HEK293 (cell line): ENCODE measurements at regions of chr12 and their contacts with region 1.

Region 1: DNA sequence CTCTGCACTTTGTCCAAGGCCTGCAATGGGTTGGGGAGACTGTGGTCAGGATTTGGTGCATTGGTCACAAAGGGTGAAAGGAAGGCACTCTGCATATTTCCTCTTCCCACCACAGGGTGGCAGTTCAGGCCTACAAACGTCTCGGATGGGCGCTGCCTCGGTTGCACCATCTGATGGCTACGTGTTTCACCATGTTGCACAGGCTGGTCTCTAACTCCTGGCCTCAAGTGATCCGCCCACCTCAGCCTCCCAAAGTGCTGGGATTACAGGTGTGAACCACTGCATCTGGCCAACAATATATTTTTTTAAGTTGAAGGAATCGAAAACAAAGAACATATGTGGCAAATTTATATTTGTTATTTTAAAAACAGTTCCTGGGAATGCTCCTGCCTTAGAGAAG is 35.1 kb downstream of the TMBIM6 start:
- H3K4me3 ChIP-seq: no peak overlapping the region
- H3K27ac ChIP-seq: no peak overlapping the region
- H3K4me1 ChIP-seq: no peaks in the 10 kb centered on the region
- CTCF ChIP-seq: peak; percentile 97

Region 2: DNA sequence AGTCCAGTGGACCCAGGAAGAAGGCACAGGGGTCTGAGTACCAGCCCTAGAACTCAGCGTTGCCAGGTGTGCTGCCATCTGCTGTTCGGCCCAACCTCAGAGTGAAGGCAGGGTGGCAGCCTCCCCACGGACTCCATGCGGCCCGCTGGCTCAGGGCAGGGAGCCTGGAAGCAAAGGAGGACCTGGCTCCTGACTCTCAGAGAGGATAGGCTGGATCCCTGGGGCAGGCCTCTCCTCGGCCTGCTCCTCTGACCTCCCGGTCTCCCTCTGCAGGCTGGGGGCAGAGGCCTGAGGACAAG is 218.5 kb before region 1 on chr12:
- CTCF ChIA-PET with region 1: no interaction called
- POLR2A ChIA-PET with region 1: no interaction called
- H3K4me3 ChIP-seq: no peak overlapping the region
- H3K27ac ChIP-seq: no peak overlapping the region
- H3K4me1 ChIP-seq: no peaks in the 10 kb centered on the region
- CTCF ChIP-seq: peak; percentile 65

Region 3: GRCh38 chr12:49763006-49763591 is 13.3 kb before region 1 on chr12:
- CTCF ChIA-PET with region 1: interaction called, 20 read pairs
- POLR2A ChIA-PET with region 1: no interaction called
- H3K4me3 ChIP-seq: no peak overlapping the region
- H3K27ac ChIP-seq: no peak overlapping the region
- H3K4me1 ChIP-seq: no peaks in the 10 kb centered on the region
- CTCF ChIP-seq: 0 out of 2 replicates have a peak, but pooled peaks have one; percentile 25

Region 4: DNA sequence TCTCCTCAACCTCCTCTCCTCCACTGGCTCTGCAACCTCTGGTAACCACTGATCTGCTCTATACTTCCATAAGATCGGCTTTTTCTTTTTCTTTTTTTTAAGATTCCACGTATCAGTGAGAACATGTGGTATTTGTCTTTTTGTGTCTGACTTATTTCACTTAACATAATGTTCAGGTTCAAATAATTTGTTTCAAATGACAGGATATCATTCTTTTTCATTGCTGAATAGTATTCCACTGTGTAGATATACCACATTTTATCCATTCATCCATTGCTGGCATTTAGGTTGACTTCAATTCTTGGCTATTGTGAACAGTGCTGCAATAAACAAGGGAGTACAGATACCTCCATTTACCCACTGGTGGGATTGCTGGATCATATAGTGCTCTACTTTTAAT is 11.3 kb after region 1 on chr12:
- CTCF ChIA-PET with region 1: interaction called, 10 read pairs
- POLR2A ChIA-PET with region 1: interaction called, 7 read pairs
- H3K4me3 ChIP-seq: no peak overlapping the region
- H3K27ac ChIP-seq: no peak overlapping the region
- H3K4me1 ChIP-seq: peaks cover 6% of the 10 kb centered on the region; the same call in 1 of the 2 replicates
- CTCF ChIP-seq: no peak

Region 5: DNA sequence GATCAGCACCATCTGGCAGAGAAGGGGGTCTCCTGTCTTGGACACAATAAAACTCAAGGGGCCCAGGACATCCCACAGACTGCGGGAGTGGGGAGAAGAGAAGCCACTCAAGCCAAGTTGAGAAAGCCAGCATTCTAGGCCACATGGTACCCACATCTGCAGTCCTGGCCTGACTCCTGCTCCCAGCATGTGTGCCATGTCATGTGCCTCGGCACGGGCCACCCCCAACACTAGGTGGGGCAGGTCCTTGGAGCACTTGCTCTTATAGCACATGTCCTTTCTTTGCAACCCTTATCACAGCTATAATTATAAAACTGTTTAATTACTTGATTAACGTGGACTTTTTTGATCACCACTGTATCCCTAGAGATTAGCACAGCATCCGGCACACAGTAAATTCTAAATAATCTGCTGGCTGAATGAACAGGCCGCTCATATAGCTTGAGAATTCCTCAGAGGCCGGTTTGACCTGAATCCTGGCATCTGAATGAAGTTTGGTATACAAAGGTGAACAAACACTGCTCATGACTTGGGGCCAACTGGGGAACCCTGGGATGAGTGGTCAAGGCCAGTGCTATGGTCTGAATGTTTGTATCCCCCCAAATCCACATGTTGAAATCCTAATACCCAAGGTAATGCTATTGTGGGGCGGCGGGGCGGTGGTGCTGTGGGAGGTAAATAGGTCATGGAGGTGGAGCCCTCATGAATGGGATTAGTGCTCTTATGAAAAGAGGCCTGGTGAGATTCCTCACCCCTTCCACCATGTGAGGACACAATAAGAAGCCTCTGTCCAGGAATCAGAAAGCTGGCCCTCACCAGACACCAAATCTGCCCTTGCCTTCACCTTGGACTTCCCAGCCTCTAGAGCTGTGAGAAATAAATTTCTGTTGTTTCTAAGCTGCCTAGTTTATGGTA is 45.2 kb after region 1 on chr12:
- CTCF ChIA-PET with region 1: interaction called, 11 read pairs
- POLR2A ChIA-PET with region 1: interaction called, 4 read pairs
- H3K4me3 ChIP-seq: no peak overlapping the region
- H3K27ac ChIP-seq: no peak overlapping the region
- H3K4me1 ChIP-seq: peaks cover 8% of the 10 kb centered on the region; the same call in 1 of the 2 replicates
- CTCF ChIP-seq: no peak

Region 6: GRCh38 chr12:49828133-49829091 is 52.0 kb after region 1 on chr12 and contains the start of gene NCKAP5L:
- CTCF ChIA-PET with region 1: interaction called, 12 read pairs
- POLR2A ChIA-PET with region 1: interaction called, 4 read pairs
- H3K4me3 ChIP-seq: peak within 1 kb of the TSS; percentile 77
- H3K27ac ChIP-seq: peak within 1 kb of the TSS; percentile 88
- H3K4me1 ChIP-seq: peaks cover 25% of the 10 kb centered on the region
- CTCF ChIP-seq: no peak

Region 7: DNA sequence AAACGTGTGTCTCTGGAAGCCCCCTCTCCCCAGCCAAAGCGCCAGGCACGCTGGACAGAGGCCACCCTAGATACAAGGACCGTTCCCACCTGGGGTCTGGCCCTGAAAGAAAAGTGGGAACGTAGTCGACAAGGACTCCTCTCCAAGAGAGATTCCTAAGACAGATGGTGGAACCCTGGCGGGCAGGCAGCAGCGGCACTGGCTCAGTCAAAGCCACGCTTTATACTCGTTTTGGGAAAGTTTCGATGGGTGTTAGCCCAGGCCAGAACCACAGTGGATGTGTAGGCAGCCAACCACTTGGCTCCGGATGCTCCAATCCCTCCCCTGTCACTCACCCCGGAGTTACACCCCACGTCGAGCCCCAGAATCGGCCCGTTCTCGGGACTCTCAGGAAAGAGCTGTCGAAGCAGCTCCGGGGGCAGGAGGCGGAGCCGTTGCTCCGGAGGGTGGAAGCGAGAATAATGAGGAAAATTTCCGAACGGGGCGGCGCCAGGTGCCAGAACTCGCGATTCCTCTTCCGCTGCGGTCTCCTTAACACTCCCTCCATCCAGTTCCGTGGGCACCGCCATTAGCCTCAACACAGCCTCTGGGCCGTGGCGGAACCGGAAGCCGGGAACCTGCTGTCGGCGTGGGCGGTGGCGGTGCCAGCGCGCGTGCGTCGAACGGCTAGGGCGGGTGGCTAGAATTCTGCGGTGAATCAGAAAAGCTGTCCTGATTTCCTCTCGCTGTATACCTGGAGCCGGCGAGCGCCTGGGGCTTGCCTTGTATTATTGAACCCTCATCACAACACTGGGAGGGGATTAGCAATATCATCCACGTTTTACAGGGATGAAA is 66.3 kb after region 1 on chr12 and contains the start of gene BCDIN3D:
- CTCF ChIA-PET with region 1: interaction called, 96 read pairs
- POLR2A ChIA-PET with region 1: interaction called, 4 read pairs
- H3K4me3 ChIP-seq: peak within 1 kb of the TSS; percentile 60
- H3K27ac ChIP-seq: peak within 1 kb of the TSS; percentile 89
- H3K4me1 ChIP-seq: peaks cover 6% of the 10 kb centered on the region; the same call in 1 of the 2 replicates
- CTCF ChIP-seq: no peak

Region 8: DNA sequence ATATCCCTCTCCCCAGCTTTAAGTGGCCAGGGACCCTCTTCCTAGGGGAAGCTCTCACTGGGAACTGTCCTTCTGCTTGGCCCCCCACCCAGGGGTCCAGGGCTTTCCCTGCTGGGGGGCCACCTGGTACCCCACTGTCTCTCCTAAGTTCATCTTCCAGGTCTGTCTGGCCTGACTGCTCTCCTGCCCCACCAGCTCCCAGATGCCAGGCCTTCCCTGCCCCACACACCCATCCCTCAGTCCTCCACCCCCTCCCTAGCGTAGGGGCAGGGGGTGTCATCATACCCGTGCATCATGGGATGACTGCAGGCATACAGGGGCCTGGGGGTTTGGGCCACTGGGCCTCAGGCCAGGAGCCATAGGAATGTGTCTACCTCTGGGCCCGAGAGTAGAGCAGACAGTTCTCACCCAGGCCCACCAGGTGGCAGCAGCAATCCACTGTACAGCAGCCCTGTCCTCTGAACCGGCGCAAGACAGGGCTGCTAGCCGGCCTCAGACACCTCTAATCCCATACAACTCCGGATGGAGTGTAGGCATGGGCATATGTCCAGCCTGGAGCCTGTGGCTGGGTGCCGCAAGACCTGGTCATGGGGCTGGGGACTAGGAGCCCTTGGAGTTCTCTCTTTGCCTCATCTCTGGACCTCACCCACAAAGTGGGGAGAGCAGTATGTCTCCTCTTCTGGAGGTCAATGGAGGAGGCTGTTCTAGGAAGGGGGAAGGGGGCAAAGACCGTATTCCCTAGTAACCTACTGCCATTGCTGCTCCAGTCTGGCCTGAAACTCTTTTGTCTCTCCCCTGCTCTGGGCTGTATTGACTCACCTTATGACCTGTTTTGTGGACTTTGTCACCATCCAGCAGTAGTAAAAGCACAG is 298.8 kb after region 1 on chr12:
- CTCF ChIA-PET with region 1: interaction called, 12 read pairs
- POLR2A ChIA-PET with region 1: no interaction called
- H3K4me3 ChIP-seq: no peak overlapping the region
- H3K27ac ChIP-seq: no peak overlapping the region
- H3K4me1 ChIP-seq: no peaks in the 10 kb centered on the region
- CTCF ChIP-seq: peak; percentile 95